CD4-positive, alpha-beta memory T cell (primary cell): ENCODE measurements at regions of chr2 and their contacts with region 1.

Region 1: GRCh38 chr2:9474361-9474967 is at the start of gene IAH1:
- DNase-seq: peak; percentile 78 to 82 (median 80)
- H3K4me3 ChIP-seq: peak within 1 kb of the TSS; percentile 11 to 86
- H3K4me3 Mint-ChIP-seq: peak within 1 kb of the TSS; percentile 83 to 91 (median 86)
- H3K27ac ChIP-seq: peak within 1 kb of the TSS; percentile 83
- H3K27ac Mint-ChIP-seq: peak within 1 kb of the TSS; percentile 80 to 95 (median 94)
- H3K4me1 ChIP-seq: peaks cover 52% of the 10 kb centered on the region
- H3K4me1 Mint-ChIP-seq: peaks cover 28 to 59% (median 45%) of the 10 kb centered on the region in 4 donors
- H3K27me3 ChIP-seq: no peaks in the 10 kb centered on the region
- H3K27me3 Mint-ChIP-seq: no peaks in the 10 kb centered on the region
- total RNA-seq, gene IAH1: 52.5 to 58.1 TPM

Region 2: DNA sequence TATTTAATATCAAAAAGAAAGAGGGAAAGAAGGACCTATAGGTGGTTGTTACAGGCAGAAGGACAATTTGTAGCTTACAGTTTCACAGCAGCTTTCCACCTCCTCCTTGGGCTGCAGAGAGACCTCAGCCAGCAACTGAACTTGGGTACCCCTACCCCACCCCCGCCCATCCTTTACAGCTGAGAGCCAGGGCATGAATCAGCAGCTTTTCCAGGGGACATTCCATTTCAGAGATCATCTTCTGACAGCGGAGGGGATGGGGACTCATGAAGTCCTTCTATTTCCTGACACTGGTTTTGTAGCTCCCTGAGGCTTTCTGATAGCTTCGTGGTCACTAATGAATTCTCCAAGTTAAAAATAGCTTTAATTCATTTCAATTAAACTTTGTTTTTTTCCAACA is 147.5 kb before region 1 on chr2:
- CTCF ChIA-PET with region 1: no interaction called
- POLR2A ChIA-PET with region 1: no interaction called
- intact Hi-C with region 1: no loop called
- DNase-seq: no peak
- H3K4me3 ChIP-seq: no peak overlapping the region
- H3K4me3 Mint-ChIP-seq: no peak overlapping the region
- H3K27ac ChIP-seq: no peak overlapping the region
- H3K27ac Mint-ChIP-seq: no peak overlapping the region
- H3K4me1 ChIP-seq: no peaks in the 10 kb centered on the region
- H3K4me1 Mint-ChIP-seq: no peaks in the 10 kb centered on the region
- H3K27me3 ChIP-seq: no peaks in the 10 kb centered on the region
- H3K27me3 Mint-ChIP-seq: peaks cover 5 to 19% of the 10 kb centered on the region in 2 donors

Region 3: GRCh38 chr2:9423100-9423921 is 51.2 kb before region 1 on chr2 and contains the starts of genes CPSF3 and ITGB1BP1:
- CTCF ChIA-PET with region 1: interaction called, 4 read pairs
- POLR2A ChIA-PET with region 1: interaction called, 42 read pairs
- intact Hi-C with region 1: loop called (anchors 1 kb)
- DNase-seq: peak; percentile 93 to 95 (median 94)
- H3K4me3 ChIP-seq: peak within 1 kb of the TSS; percentile 77 to 97
- H3K4me3 Mint-ChIP-seq: peak within 1 kb of the TSS in 5 of 8 donors; percentile 91 to 93 (median 91)
- H3K27ac ChIP-seq: peak within 1 kb of the TSS; percentile 88
- H3K27ac Mint-ChIP-seq: peak within 1 kb of the TSS in 6 of 7 donors; percentile 85 to 95 (median 94)
- H3K4me1 ChIP-seq: peaks cover 43% of the 10 kb centered on the region
- H3K4me1 Mint-ChIP-seq: peaks cover 24 to 30% (median 28%) of the 10 kb centered on the region in 4 donors
- H3K27me3 ChIP-seq: no peaks in the 10 kb centered on the region
- H3K27me3 Mint-ChIP-seq: no peaks in the 10 kb centered on the region
- total RNA-seq, gene CPSF3: 20.9 to 22.4 TPM
- total RNA-seq, gene ITGB1BP1: 55.1 to 55.8 TPM

Region 4: GRCh38 chr2:9484533-9484932 is 10.1 kb after region 1 on chr2:
- CTCF ChIA-PET with region 1: interaction called, 5 read pairs
- POLR2A ChIA-PET with region 1: interaction called, 23 read pairs
- intact Hi-C with region 1: no loop called
- DNase-seq: no peak
- H3K4me3 ChIP-seq: no peak overlapping the region
- H3K4me3 Mint-ChIP-seq: no peak overlapping the region
- H3K27ac ChIP-seq: no peak overlapping the region
- H3K27ac Mint-ChIP-seq: peak overlapping the region in 1 of 7 donors; percentile 36
- H3K4me1 ChIP-seq: no peaks in the 10 kb centered on the region
- H3K4me1 Mint-ChIP-seq: peaks cover 10 to 15% (median 11%) of the 10 kb centered on the region in 4 donors
- H3K27me3 ChIP-seq: no peaks in the 10 kb centered on the region
- H3K27me3 Mint-ChIP-seq: no peaks in the 10 kb centered on the region

Region 5: GRCh38 chr2:9596621-9597311 is 122.3 kb after region 1 on chr2:
- CTCF ChIA-PET with region 1: no interaction called
- POLR2A ChIA-PET with region 1: no interaction called
- intact Hi-C with region 1: no loop called
- DNase-seq: no peak
- H3K4me3 ChIP-seq: no peak overlapping the region
- H3K4me3 Mint-ChIP-seq: peak overlapping the region; percentile 80 to 91 (median 82)
- H3K27ac ChIP-seq: peak overlapping the region; percentile 40
- H3K27ac Mint-ChIP-seq: peak overlapping the region; percentile 74 to 94 (median 91)
- H3K4me1 ChIP-seq: peaks cover 50% of the 10 kb centered on the region
- H3K4me1 Mint-ChIP-seq: peaks cover 34 to 69% (median 53%) of the 10 kb centered on the region in 4 donors
- H3K27me3 ChIP-seq: no peaks in the 10 kb centered on the region
- H3K27me3 Mint-ChIP-seq: no peaks in the 10 kb centered on the region